ENCODE measurements at regions of chr17 and their contacts with region 1.

Region 1: GRCh38 chr17:50312308-50312707 is 33.6 kb upstream of the XYLT2 start:
- DNase-seq: no peak
- ATAC-seq: no peak
- H3K4me3 ChIP-seq: no peak overlapping the region
- H3K27ac ChIP-seq: no peak overlapping the region
- H3K4me1 ChIP-seq: no peaks in the 10 kb centered on the region
- H3K27me3 ChIP-seq: peaks cover 4% of the 10 kb centered on the region; the same call in 1 of the 2 replicates
- CTCF ChIP-seq: no peak

Region 2: DNA sequence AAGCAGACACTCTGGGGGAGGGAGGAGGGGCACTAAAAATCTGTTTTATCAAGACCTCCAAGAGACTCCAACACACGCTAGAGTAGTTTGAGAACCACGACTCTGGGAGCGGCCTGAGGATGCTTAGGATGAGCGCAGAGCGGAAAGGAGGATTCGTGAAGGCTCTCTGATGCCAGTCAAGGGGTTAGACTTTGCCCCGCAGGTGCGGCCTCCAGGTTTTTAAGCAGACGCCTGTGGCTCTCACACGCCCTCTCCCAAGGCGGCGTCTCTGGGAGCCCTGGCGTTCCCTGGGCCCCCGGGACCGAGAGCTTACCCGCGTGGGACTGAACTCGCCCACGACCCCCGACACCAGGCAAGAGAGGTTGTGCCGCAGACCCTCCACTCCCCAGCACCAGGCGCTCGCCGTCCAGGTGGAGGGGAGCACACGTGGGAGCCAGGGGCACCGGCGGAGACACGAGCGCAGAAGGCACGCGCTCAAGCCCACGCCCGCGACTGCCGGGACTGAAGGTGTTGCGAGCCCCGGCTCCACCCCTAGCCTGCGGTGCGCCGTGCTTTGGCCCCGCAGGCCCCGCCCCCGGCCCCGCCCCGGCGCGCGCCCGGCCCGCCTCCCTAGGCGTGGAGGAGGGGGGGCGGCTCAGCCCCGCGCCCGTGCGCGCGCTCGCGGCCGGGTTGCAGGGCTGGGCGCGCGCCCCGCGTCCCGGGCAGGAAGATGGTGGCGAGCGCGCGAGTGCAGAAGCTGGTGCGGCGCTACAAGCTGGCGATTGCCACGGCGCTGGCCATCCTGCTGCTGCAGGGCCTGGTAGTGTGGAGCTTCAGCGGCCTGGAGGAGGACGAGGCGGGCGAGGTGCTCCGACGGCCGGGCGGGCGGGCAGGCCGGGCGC is 33.4 kb after region 1 on chr17 and contains the start of gene XYLT2:
- CTCF ChIA-PET with region 1: no interaction called
- POLR2A ChIA-PET with region 1: no interaction called
- in situ Hi-C with region 1: no loop called
- intact Hi-C with region 1: no loop called
- DNase-seq: no peak
- ATAC-seq: peak; percentile 92
- H3K4me3 ChIP-seq: peak within 1 kb of the TSS; percentile 70 to 85
- H3K27ac ChIP-seq: peak within 1 kb of the TSS; percentile 73
- H3K4me1 ChIP-seq: peaks cover 8% of the 10 kb centered on the region
- H3K27me3 ChIP-seq: no peaks in the 10 kb centered on the region
- CTCF ChIP-seq: no peak
- total RNA-seq, gene XYLT2: 28.5 TPM

Region 3: GRCh38 chr17:51971121-51971520 is 1658.8 kb after region 1 on chr17:
- CTCF ChIA-PET with region 1: interaction called, 10 read pairs
- POLR2A ChIA-PET with region 1: no interaction called
- in situ Hi-C with region 1: no loop called
- intact Hi-C with region 1: no loop called
- DNase-seq: no peak
- ATAC-seq: no peak
- H3K4me3 ChIP-seq: no peak overlapping the region
- H3K27ac ChIP-seq: no peak overlapping the region
- H3K4me1 ChIP-seq: no peaks in the 10 kb centered on the region
- H3K27me3 ChIP-seq: no peaks in the 10 kb centered on the region
- CTCF ChIP-seq: no peak

Measured in Panc1 (cell line).